ENCODE measurements at regions of chr22 and their contacts with region 1.

Region 1: GRCh38 chr22:40177738-40178416 is at the start of gene TNRC6B:
- DNase-seq: peak; percentile 79
- H3K4me3 Mint-ChIP-seq: peak within 1 kb of the TSS; percentile 88
- H3K27ac Mint-ChIP-seq: peak within 1 kb of the TSS; percentile 89
- H3K4me1 Mint-ChIP-seq: peaks cover 52% of the 10 kb centered on the region
- H3K27me3 Mint-ChIP-seq: no peaks in the 10 kb centered on the region
- total RNA-seq, gene TNRC6B: 28.0 and 34.1 TPM in 2 replicates

Region 2: DNA sequence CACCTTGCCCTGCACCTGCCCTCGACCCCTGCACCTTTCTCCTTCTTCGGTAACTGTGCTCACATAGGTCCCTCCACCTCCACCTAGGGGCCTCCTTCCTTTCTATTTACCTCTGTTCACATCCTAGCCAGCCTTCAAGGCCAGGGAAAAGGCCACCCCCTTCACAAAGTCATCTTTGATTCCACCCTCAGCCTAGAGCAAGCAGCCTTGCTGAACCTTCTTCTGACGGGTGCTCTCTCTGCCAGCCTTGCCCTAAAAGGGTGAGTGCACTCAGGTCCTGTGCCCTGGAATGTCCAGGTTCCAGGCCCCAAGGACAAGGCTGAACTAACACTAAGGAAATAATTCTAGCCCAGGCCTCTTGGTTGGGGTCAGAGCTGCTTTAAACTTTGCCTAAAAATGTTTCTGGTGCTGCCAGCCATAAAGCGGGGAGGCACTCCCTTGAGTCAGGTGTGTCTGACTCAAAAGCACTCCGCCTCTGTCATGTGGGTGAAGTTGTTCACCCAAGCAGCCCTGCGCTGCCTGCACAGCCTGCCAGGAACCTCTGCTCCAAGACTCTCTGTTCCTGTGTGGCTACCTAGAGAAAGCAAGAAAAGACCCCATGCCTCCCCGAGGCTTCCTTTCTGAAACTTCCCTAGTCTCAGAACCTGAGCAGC is 192.4 kb before region 1 on chr22:
- intact Hi-C with region 1: no loop called
- DNase-seq: no peak
- H3K4me3 Mint-ChIP-seq: no peak overlapping the region
- H3K27ac Mint-ChIP-seq: no peak overlapping the region
- H3K4me1 Mint-ChIP-seq: peaks cover 11% of the 10 kb centered on the region
- H3K27me3 Mint-ChIP-seq: peaks cover 7% of the 10 kb centered on the region

Region 3: GRCh38 chr22:40044102-40044869 is 133.6 kb before region 1 on chr22:
- intact Hi-C with region 1: loop called (anchors 1 kb)
- DNase-seq: peak; percentile 99
- H3K4me3 Mint-ChIP-seq: peak overlapping the region; percentile 98
- H3K27ac Mint-ChIP-seq: peak overlapping the region; percentile 100
- H3K4me1 Mint-ChIP-seq: peaks cover 27% of the 10 kb centered on the region
- H3K27me3 Mint-ChIP-seq: peaks cover 6% of the 10 kb centered on the region

Region 4: GRCh38 chr22:40107851-40108378 is 70.0 kb before region 1 on chr22:
- intact Hi-C with region 1: loop called (anchors 2 kb)
- DNase-seq: peak; percentile 25
- H3K4me3 Mint-ChIP-seq: peak overlapping the region; percentile 76
- H3K27ac Mint-ChIP-seq: peak overlapping the region; percentile 84
- H3K4me1 Mint-ChIP-seq: peaks cover 47% of the 10 kb centered on the region
- H3K27me3 Mint-ChIP-seq: no peaks in the 10 kb centered on the region

Region 5: DNA sequence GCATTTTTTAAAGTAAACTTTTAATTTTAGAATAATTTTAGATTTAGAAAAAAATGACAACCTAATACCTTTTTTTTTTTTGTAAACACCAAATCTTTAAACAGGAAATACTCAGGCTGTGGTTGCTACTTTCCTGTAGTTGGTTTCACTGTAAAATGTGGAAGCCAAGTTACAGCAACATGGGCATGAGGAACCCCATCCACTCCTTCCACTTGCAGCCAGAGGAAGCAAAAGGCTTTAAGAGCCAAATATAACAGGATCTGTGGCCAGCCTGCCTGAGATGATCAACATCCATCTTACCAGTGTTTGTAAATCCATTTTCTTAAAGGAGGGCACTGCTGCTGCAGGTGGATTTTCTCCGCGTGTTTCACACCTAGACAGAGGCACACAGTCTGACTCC is 66.0 kb after region 1 on chr22:
- intact Hi-C with region 1: loop called (anchors 2 kb)
- DNase-seq: no peak
- H3K4me3 Mint-ChIP-seq: peak overlapping the region; percentile 21
- H3K27ac Mint-ChIP-seq: peak overlapping the region; percentile 17
- H3K4me1 Mint-ChIP-seq: peaks cover 64% of the 10 kb centered on the region
- H3K27me3 Mint-ChIP-seq: no peaks in the 10 kb centered on the region

Region 6: DNA sequence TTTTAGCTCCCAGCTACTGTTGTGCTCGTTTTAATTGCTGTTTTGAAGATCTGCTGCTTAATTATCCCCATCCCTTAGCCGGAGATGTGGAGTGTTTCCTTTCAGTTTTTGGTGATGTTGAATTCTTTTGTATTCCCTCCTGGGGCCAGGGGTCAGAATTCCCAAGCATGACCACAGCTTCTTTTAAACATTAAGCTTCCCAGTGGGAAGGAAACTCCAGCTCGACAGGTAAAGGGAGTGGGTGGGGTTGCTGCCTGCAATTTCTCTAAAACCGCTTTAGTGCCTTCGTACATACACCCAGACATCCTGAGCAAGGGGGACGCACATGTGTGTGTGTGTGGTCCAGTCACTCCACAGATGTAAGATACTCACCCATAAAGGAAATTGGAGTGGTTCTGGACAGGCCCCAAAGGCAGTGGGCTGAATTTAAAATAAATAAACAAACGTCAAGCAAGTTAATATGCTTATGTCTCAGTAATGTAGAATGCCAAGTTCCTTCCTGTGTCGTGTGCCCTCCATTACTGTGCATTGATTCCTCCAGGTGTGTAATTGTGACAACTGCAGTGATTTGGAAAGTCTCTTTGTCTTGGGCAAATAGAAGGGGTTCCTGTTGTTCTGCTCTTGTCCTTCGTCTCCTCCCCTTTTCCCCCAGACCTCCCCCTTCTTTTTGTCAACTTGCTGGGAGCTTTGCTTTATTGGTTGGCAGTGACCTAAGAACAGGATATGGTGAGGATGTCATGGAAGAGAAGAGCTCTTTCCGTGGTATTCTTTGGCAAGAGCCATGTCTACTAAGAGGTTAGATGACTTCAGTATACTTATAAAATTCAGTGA is 149.2 kb after region 1 on chr22:
- intact Hi-C with region 1: loop called (anchors 1 kb)
- DNase-seq: no peak
- H3K4me3 Mint-ChIP-seq: no peak overlapping the region
- H3K27ac Mint-ChIP-seq: no peak overlapping the region
- H3K4me1 Mint-ChIP-seq: peaks cover 89% of the 10 kb centered on the region
- H3K27me3 Mint-ChIP-seq: no peaks in the 10 kb centered on the region